HEK293T (cell line): ENCODE measurements at regions of chr17 and their contacts with region 1.

Region 1: GRCh38 chr17:38509008-38509771 is 80.9 kb downstream of the ARHGAP23 start:
- DNase-seq: peak; percentile 76

Region 2: DNA sequence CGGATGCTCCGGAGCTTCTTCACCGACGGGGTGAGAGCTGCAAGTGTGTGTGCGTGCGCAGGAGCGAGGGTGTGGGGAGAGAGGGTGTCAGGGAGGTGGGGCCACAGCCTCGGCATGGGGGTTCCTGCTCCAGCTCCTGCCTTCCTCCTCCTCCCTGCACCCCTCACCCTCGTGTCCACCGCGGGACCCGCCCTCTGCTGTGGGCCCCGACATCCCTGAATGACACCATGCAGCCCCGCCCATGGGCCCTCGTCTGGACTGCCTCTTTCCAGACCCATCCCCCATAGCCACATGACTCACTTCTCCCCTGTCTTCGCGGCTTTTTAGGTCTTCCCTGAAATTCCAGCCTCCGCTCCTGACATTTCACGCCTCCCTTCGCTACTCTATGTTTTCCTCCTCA is 39.3 kb before region 1 on chr17:
- CTCF ChIA-PET with region 1: no interaction called
- POLR2A ChIA-PET with region 1: no interaction called
- DNase-seq: no peak

Region 3: DNA sequence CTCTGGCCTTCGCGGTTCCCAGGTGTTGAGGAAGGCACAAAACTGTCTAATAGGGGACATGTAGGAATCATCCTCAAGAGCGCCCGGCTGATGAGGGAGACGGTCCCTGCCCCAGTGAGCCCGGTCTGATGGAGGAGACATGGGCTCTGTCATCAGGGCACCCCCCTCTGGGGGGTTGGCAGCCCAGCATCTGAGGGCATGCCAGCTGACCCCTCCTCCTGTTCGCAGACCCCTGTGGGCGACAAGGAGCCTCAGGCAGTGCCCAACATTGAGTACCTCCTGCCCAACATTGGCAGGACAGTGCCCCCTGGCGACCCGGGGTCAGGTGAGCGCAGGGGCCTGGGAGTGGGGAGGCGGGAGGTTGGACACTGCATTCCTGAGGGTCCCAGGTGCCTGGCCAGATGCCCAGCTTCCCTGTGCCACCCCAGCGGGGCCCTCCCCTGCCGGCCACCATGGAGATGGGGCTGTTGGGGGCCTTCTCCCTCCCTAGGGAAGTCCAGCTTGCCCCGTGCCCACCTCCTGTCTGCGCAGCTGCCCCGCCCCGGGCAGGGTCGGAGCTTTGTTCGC is 10.9 kb before region 1 on chr17:
- CTCF ChIA-PET with region 1: interaction called, 14 read pairs
- POLR2A ChIA-PET with region 1: no interaction called
- DNase-seq: no peak

Region 4: DNA sequence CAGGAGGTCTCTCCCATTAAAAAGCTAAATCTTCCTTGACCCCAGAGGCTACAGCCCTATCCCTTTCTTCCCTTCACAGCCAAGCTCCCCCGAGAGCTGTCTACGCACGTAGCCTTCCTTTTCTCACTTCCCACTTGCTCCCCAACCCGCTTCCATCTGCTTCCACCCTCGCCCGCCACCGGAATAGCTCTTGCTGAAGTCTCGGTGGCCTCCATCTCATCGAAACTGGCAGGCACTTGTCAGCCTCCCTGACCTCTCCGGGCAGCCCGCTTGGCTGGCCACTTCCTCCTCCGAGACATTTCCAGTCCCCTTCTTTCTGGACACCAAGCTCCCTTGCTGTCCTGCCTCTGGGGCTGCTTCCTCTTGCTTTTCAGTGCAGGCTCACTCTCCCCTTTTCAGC is 176.3 kb after region 1 on chr17:
- CTCF ChIA-PET with region 1: no interaction called
- POLR2A ChIA-PET with region 1: no interaction called
- DNase-seq: no peak